Heart right ventricle (tissue), 16 donors: ENCODE measurements at regions of chr14 and their contacts with region 1.

Region 1: GRCh38 chr14:32576088-32576795 is 247.1 kb downstream of the AKAP6 start:
- DNase-seq: peak in 1 of 2 donors; percentile 34
- ATAC-seq: peak; percentile 70 to 91 (median 82)
- H3K4me3 ChIP-seq: peak overlapping the region in 4 of 10 donors; percentile 23 to 39 (median 26)
- H3K27ac ChIP-seq: peak overlapping the region in 1 of 10 donors; percentile 9
- H3K4me1 ChIP-seq: peaks cover 4 to 55% (median 14%) of the 10 kb centered on the region in 9 donors
- H3K27me3 ChIP-seq: no peaks in the 10 kb centered on the region
- CTCF ChIP-seq: peak; percentile 87 to 99 (median 95)

Region 2: DNA sequence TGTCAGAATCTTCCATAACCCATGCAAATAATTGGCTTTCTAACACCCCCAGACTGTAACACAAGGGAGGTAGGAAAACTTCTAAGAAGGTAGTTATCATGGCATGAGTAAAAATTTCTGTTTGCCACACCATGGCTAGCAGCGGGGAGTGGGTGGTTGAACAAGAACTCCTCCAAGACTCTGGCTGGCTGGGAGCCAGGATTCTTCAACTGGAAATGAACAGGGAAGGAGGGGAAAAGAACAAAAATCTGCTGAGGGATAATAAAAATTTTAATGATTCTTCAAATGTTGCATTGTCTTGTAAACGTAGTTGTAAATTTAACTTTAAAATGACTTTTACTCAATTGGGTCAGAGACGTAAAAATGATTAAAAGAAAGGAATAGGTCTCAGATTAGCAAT is 168.2 kb before region 1 on chr14:
- intact Hi-C with region 1: no loop called
- DNase-seq: no peak
- ATAC-seq: no peak
- H3K4me3 ChIP-seq: no peak overlapping the region
- H3K27ac ChIP-seq: peak overlapping the region in 5 of 10 donors; percentile 30 to 67 (median 57)
- H3K4me1 ChIP-seq: peaks cover 0 to 41% (median 9%) of the 10 kb centered on the region in 9 donors
- H3K27me3 ChIP-seq: no peaks in the 10 kb centered on the region
- CTCF ChIP-seq: no peak

Region 3: GRCh38 chr14:32524609-32525375 is 51.5 kb before region 1 on chr14:
- intact Hi-C with region 1: no loop called
- DNase-seq: no peak
- ATAC-seq: peak in 1 of 8 donors; percentile 44
- H3K4me3 ChIP-seq: no peak overlapping the region
- H3K27ac ChIP-seq: peak overlapping the region in 1 of 10 donors; percentile 15
- H3K4me1 ChIP-seq: peaks cover 0 to 17% (median 4%) of the 10 kb centered on the region in 9 donors
- H3K27me3 ChIP-seq: no peaks in the 10 kb centered on the region
- CTCF ChIP-seq: no peak

Region 4: GRCh38 chr14:32761381-32761968 is 185.2 kb after region 1 on chr14:
- intact Hi-C with region 1: no loop called
- DNase-seq: no peak
- ATAC-seq: no peak
- H3K4me3 ChIP-seq: no peak overlapping the region
- H3K27ac ChIP-seq: no peak overlapping the region
- H3K4me1 ChIP-seq: peaks cover 0 to 23% (median 6%) of the 10 kb centered on the region in 9 donors
- H3K27me3 ChIP-seq: no peaks in the 10 kb centered on the region
- CTCF ChIP-seq: no peak

Region 5: GRCh38 chr14:32826404-32827082 is 250.3 kb after region 1 on chr14:
- intact Hi-C with region 1: loop called in 5 of 10 experiments (anchors 10 kb)
- DNase-seq: peak in 1 of 2 donors; percentile 29
- ATAC-seq: peak; percentile 31 to 79 (median 73)
- H3K4me3 ChIP-seq: no peak overlapping the region
- H3K27ac ChIP-seq: peak overlapping the region in 6 of 10 donors; percentile 18 to 68 (median 28)
- H3K4me1 ChIP-seq: peaks cover 0 to 67% (median 29%) of the 10 kb centered on the region in 9 donors
- H3K27me3 ChIP-seq: no peaks in the 10 kb centered on the region
- CTCF ChIP-seq: peak in 5 of 9 donors; percentile 18 to 45 (median 43)

Region 6: DNA sequence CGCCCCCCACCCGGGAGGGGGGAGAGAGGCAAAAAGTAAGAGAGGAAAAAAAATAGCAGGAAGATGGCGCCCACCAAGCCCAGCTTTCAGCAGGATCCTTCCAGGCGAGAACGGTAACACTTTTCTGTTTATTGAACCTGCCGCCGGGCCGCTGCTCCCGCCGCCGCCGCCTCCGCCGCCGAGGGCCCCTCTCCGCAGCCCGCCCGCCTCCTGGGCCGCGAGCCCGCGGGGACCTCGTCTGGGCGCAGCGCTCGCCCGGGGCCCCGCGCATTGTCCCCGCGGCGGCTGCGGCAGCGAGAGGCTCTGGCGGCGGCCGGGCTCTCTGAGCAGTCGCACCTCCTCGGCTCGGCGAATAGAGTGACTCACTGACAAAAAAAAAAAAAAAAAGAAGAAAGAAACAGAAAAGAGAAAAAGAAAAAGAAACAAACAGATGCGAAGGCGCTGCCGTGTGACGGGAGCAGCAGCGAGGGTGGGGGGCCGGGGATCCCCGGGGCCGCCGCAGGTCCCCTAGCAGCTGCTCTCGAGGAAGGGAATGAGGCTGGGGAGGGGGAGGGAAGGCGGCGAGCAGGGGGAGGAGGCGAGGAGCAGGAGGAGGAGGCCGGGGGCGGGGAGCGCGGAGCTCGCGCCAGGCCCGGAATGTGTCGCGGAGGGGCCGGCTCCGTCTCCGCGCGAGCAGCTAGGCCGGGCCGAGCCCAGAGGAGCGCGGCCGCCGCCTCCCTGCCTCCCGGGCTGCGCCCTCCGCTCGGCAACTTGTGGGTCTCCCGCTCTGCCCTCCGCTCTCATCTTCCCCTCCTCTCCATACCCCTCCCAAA is 363.2 kb after region 1 on chr14:
- intact Hi-C with region 1: loop called in 1 of 10 experiments (anchors 10 kb)
- DNase-seq: peak; percentile 82
- ATAC-seq: peak; percentile 92 to 95 (median 94)
- H3K4me3 ChIP-seq: peak overlapping the region; percentile 18 to 72 (median 58)
- H3K27ac ChIP-seq: peak overlapping the region; percentile 50 to 86 (median 80)
- H3K4me1 ChIP-seq: peaks cover 0 to 28% (median 12%) of the 10 kb centered on the region in 9 donors
- H3K27me3 ChIP-seq: peaks cover 0 to 66% (median 33%) of the 10 kb centered on the region in 7 donors
- CTCF ChIP-seq: no peak

Region 7: GRCh38 chr14:33343009-33343408 is 766.8 kb after region 1 on chr14:
- intact Hi-C with region 1: loop called in 1 of 10 experiments (anchors 10 kb)
- DNase-seq: no peak
- ATAC-seq: no peak
- H3K4me3 ChIP-seq: no peak overlapping the region
- H3K27ac ChIP-seq: no peak overlapping the region
- H3K4me1 ChIP-seq: no peaks in the 10 kb centered on the region
- H3K27me3 ChIP-seq: peaks cover 0 to 3% (median 0%) of the 10 kb centered on the region in 7 donors
- CTCF ChIP-seq: no peak

Region 8: DNA sequence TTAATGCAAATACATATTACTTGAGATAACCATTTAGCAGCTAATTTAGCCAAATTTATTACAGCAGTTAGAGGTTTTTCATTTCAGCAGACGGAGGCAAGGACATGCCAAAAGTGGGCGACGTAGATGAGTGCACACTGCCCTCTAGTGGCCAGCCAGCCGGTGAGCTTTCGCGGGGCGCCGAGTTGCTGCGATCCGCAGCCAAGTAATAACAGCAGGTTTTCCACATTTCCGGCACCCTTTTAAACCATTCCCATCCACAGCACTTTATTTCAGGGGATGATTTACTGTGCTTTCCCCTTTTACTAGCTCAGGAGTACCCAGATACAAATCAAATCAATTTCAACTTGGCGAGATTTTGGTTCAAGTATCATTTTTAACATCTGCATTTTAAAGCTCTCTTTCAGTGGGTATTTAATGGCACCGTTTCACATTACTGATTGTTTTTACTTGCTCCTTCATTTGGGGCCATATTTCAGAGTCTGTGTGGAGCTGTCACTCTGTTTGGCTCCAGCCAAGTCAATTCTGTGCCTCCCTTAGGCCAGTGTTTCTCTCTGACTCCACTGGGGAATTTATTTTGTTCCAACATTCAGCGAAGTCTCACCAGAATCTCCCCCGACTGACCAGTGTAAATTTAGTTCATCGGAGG is 1216.6 kb after region 1 on chr14:
- intact Hi-C with region 1: loop called in 9 of 10 experiments (anchors 2 to 10 kb)
- DNase-seq: peak; percentile 83
- ATAC-seq: peak; percentile 85 to 95 (median 88)
- H3K4me3 ChIP-seq: peak overlapping the region in 7 of 10 donors; percentile 1 to 44 (median 34)
- H3K27ac ChIP-seq: peak overlapping the region in 1 of 10 donors; percentile 41
- H3K4me1 ChIP-seq: peaks cover 0 to 27% (median 7%) of the 10 kb centered on the region in 9 donors
- H3K27me3 ChIP-seq: peaks cover 0 to 8% (median 0%) of the 10 kb centered on the region in 7 donors
- CTCF ChIP-seq: peak; percentile 84 to 98 (median 95)

Region 9: GRCh38 chr14:34237081-34237480 is 1660.8 kb after region 1 on chr14:
- intact Hi-C with region 1: loop called in 1 of 10 experiments (anchors 10 kb)
- DNase-seq: no peak
- ATAC-seq: no peak
- H3K4me3 ChIP-seq: no peak overlapping the region
- H3K27ac ChIP-seq: no peak overlapping the region
- H3K4me1 ChIP-seq: peaks cover 0 to 51% (median 10%) of the 10 kb centered on the region in 9 donors
- H3K27me3 ChIP-seq: no peaks in the 10 kb centered on the region
- CTCF ChIP-seq: no peak

Region 10: GRCh38 chr14:34322940-34323418 is 1746.7 kb after region 1 on chr14:
- intact Hi-C with region 1: loop called in 4 of 10 experiments (anchors 10 kb)
- DNase-seq: peak; percentile 51
- ATAC-seq: peak in 7 of 8 donors; percentile 51 to 71 (median 68)
- H3K4me3 ChIP-seq: no peak overlapping the region
- H3K27ac ChIP-seq: no peak overlapping the region
- H3K4me1 ChIP-seq: peaks cover 0 to 12% (median 0%) of the 10 kb centered on the region in 9 donors
- H3K27me3 ChIP-seq: no peaks in the 10 kb centered on the region
- CTCF ChIP-seq: peak; percentile 54 to 79 (median 75)